HEK293T (cell line): ENCODE measurements at regions of chr16 and their contacts with region 1.

Region 1: GRCh38 chr16:56450986-56451752 is at the starts of genes NUDT21 and OGFOD1:
- DNase-seq: peak; percentile 98

Region 2: GRCh38 chr16:56425439-56425832 is 25.7 kb before region 1 on chr16 and contains the start of gene AMFR:
- CTCF ChIA-PET with region 1: no interaction called
- POLR2A ChIA-PET with region 1: interaction called, 10 read pairs
- DNase-seq: peak; percentile 85

Region 3: GRCh38 chr16:56493126-56493525 is 42.0 kb after region 1 on chr16:
- CTCF ChIA-PET with region 1: no interaction called
- POLR2A ChIA-PET with region 1: no interaction called
- DNase-seq: no peak

Region 4: DNA sequence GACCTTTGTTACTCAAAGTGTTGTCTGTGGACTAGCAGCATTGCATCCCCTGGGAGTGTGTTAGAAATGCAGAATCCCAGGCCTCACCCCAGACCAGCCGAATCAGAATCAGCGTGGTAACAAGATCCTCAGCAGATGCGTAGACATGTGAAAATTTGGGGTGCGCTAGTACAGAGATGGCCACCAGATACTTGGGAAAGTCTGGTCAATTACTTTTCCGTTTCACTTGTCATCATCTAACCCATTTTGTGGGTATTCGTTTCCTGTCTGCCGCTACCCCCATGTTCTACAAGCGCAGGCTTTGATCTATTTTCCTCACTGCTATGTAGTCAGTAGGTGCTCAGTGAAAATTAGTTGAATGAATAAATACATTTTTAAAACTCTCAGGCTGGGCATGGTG is 447.7 kb after region 1 on chr16:
- CTCF ChIA-PET with region 1: no interaction called
- POLR2A ChIA-PET with region 1: no interaction called
- DNase-seq: no peak